ENCODE measurements at regions of chr11 and their contacts with region 1.

Region 1: DNA sequence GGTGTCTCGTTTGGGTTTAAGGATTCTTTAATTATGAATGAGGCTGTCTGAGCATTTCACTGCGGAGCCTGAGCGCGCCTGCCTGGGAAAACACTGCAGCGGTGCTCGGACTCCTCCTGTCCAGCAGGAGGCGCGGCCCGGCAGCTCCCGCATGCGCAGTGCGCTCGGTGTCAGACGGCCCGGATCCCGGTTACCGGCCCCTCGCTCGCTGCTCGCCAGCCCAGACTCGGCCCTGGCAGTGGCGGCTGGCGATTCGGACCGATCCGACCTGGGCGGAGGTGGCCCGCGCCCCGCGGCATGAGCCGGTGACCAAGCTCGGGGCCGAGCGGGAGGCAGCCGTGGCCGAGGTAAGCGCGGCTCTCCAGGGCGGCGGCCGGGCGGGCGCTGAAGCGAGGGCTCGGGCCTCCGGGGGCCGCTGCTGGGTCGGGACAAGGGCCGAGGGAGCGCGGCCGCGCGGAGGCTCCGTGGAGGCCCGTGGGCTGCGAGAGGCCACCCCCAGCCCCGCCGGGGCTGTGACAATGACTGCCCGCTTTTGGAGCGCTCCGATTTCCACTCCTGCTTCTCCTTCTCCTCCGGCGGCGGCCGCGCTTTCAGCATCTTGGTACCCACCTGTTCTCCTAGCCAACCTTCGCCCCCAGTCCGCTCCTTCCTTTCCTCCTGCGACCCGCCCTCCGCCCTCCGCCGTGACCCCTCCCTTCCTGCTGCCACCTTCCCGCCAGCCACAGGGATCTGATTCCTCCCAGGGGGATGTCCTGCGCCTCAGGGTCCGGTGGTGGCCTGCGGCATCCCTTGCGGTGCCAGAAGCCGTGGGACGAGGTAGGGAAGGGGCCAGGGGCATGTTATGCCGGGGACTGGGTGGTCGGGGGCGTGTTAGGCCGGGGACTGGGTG is at the start of gene EXT2:
- DNase-seq: peak; percentile 78 to 85
- ATAC-seq: peak; percentile 95
- H3K4me3 ChIP-seq: peak within 1 kb of the TSS; percentile 71 to 90 (median 86)
- H3K27ac ChIP-seq: peak within 1 kb of the TSS; percentile 76 to 91 (median 84)
- H3K4me1 ChIP-seq: peaks cover 17 to 22% of the 10 kb centered on the region in 2 donors
- H3K27me3 ChIP-seq: no peaks in the 10 kb centered on the region
- CTCF ChIP-seq: peak; percentile 83 to 92 (median 89)
- POLR2A ChIP-seq: peak; percentile 56 to 69
- total RNA-seq, gene EXT2: 20.4 to 24.8 (median 23.1) TPM

Region 2: GRCh38 chr11:44110231-44110679 is 14.5 kb after region 1 on chr11:
- in situ Hi-C with region 1: no loop called
- intact Hi-C with region 1: loop called (anchors 2 kb)
- DNase-seq: peak; percentile 20 to 50
- ATAC-seq: peak; percentile 27 to 50
- H3K4me3 ChIP-seq: no peak overlapping the region
- H3K27ac ChIP-seq: no peak overlapping the region
- H3K4me1 ChIP-seq: peaks cover 29 to 43% of the 10 kb centered on the region in 2 donors
- H3K27me3 ChIP-seq: no peaks in the 10 kb centered on the region
- CTCF ChIP-seq: peak; percentile 56 to 80 (median 67)
- POLR2A ChIP-seq: no peak

Region 3: DNA sequence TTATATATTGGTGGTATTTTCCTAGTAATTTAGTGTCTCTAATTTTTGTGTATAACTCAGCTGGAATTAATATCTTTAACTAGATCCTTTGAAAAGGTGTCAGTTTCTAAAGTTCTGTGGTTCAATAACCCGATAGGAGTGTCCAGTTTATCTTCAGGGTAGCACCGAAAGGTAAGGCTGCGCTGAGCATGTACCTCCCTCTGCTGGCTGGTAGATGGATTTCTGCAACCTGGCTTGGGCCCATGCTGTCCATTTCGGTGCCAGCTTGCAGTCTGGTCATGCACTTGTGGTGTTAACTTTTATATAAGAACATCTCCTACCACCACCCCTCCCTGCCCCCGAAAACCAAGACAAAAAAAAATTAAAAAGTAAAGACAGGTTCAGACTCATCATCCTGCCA is 24.4 kb after region 1 on chr11:
- in situ Hi-C with region 1: no loop called
- intact Hi-C with region 1: loop called (anchors 1 kb)
- DNase-seq: peak in 1 of 2 donors; percentile 61
- ATAC-seq: peak; percentile 79 to 83
- H3K4me3 ChIP-seq: no peak overlapping the region
- H3K27ac ChIP-seq: peak overlapping the region in 2 of 4 donors; percentile 30 to 52
- H3K4me1 ChIP-seq: peaks cover 32 to 38% of the 10 kb centered on the region in 2 donors
- H3K27me3 ChIP-seq: no peaks in the 10 kb centered on the region
- CTCF ChIP-seq: peak; percentile 57 to 73 (median 64)
- POLR2A ChIP-seq: no peak

Region 4: GRCh38 chr11:44611687-44612434 is 516.1 kb after region 1 on chr11:
- in situ Hi-C with region 1: no loop called
- intact Hi-C with region 1: loop called (anchors 10 kb)
- DNase-seq: no peak
- ATAC-seq: no peak
- H3K4me3 ChIP-seq: no peak overlapping the region
- H3K27ac ChIP-seq: no peak overlapping the region
- H3K4me1 ChIP-seq: peaks cover 7 to 19% of the 10 kb centered on the region in 2 donors
- H3K27me3 ChIP-seq: no peaks in the 10 kb centered on the region
- CTCF ChIP-seq: no peak
- POLR2A ChIP-seq: no peak

Measured in gastrocnemius medialis (tissue), 4 donors.